ENCODE measurements at regions of chr13 and their contacts with region 1.

Region 1: GRCh38 chr13:28792992-28793391 is 27.1 kb upstream of the MTUS2 start:
- DNase-seq: no peak
- H3K4me3 ChIP-seq: no peak overlapping the region
- H3K27ac ChIP-seq: no peak overlapping the region
- H3K4me1 ChIP-seq: no peaks in the 10 kb centered on the region
- H3K27me3 ChIP-seq: peaks cover 6% of the 10 kb centered on the region
- CTCF ChIP-seq: no peak
- POLR2A ChIP-seq: no peak

Region 2: GRCh38 chr13:28324181-28324789 is 468.7 kb before region 1 on chr13:
- intact Hi-C with region 1: loop called (anchors 5 kb)
- DNase-seq: peak; percentile 53 to 77 (median 67)
- H3K4me3 ChIP-seq: no peak overlapping the region
- H3K27ac ChIP-seq: no peak overlapping the region
- H3K4me1 ChIP-seq: no peaks in the 10 kb centered on the region
- H3K27me3 ChIP-seq: no peaks in the 10 kb centered on the region
- CTCF ChIP-seq: peak; percentile 61 to 78 (median 72)
- POLR2A ChIP-seq: no peak

Region 3: DNA sequence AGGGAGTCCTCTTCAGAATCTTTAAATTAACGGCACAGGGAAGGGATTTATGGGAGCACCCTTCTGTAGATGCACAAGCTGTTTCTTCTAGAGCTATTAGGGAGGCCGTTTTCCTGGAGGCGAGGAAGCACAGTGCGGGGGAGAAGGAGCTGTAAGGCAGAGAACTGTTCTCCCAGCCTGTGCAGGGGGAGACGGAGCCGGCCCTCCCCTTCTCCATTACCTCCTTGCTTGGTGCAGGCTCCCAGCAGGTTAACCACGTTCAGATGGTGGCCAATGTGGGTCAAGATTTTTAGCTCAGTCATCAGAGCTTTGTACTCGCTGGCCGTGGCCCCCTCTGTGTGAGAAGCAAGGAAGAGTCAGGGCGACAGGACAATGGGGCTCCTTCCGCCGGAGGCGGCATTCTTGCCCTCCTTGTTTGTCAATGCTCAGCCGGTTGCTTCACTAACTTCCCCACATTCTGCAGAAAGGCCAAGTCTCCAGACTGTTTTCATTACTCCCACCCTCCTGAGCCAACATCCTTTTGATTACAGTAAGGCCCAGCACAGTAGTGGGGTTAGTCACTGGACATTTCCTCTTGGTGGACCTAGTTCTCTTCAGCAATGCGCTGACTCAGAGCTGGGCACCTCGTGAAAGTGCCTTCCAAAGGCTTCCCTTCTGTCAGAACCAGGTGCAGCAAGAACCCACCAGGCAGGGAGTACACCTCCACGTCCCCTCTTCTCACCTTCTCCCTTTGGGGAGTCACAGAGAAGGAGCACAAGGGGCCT is 463.4 kb before region 1 on chr13:
- intact Hi-C with region 1: loop called (anchors 5 kb)
- DNase-seq: peak in 5 of 7 donors; percentile 15 to 55 (median 26)
- H3K4me3 ChIP-seq: no peak overlapping the region
- H3K27ac ChIP-seq: peak overlapping the region in 1 of 5 donors; percentile 40
- H3K4me1 ChIP-seq: no peaks in the 10 kb centered on the region
- H3K27me3 ChIP-seq: no peaks in the 10 kb centered on the region
- CTCF ChIP-seq: no peak
- POLR2A ChIP-seq: no peak

Region 4: DNA sequence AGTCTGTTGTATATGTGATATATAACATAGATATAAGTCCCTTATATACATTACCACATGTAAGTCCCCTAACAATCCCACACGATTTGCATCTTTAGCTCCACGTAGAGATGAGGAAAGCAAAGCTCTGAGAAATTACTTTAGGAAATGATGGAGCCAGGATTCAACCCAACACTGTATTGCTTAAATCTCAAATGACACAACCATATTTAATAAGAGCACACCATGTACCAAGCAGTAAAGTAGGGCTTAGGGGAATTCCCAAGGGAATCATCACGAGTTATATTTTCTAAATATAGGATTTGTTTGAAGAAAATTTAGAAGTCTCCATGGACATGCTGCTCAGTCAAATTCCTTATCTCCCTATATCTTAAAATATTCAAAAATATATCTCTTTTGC is 195.4 kb before region 1 on chr13:
- intact Hi-C with region 1: no loop called
- DNase-seq: no peak
- H3K4me3 ChIP-seq: no peak overlapping the region
- H3K27ac ChIP-seq: no peak overlapping the region
- H3K4me1 ChIP-seq: no peaks in the 10 kb centered on the region
- H3K27me3 ChIP-seq: peaks cover 3% of the 10 kb centered on the region
- CTCF ChIP-seq: no peak
- POLR2A ChIP-seq: no peak

Region 5: DNA sequence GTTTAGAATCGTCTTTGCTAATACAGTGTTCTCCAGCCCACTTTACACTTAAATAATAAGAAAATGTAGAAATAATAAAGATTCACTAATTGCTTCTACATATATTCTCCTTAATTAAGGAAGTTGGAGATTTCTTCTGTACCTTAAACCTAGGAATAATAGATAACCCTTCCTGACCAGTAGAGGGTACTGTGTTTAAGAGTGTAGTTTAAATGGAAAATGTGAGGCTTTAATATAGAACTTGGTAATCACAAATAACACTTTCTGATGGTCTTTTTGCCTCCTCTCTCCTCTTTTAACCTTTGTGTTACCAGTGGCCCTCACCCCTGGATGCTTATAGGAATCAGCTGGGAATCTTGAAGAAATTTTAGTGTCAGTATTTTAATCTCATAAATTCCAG is 113.4 kb before region 1 on chr13:
- intact Hi-C with region 1: loop called in 1 of 2 experiments (anchors 5 kb)
- DNase-seq: no peak
- H3K4me3 ChIP-seq: no peak overlapping the region
- H3K27ac ChIP-seq: no peak overlapping the region
- H3K4me1 ChIP-seq: no peaks in the 10 kb centered on the region
- H3K27me3 ChIP-seq: no peaks in the 10 kb centered on the region
- CTCF ChIP-seq: peak; percentile 16 to 53 (median 34)
- POLR2A ChIP-seq: no peak

Region 6: DNA sequence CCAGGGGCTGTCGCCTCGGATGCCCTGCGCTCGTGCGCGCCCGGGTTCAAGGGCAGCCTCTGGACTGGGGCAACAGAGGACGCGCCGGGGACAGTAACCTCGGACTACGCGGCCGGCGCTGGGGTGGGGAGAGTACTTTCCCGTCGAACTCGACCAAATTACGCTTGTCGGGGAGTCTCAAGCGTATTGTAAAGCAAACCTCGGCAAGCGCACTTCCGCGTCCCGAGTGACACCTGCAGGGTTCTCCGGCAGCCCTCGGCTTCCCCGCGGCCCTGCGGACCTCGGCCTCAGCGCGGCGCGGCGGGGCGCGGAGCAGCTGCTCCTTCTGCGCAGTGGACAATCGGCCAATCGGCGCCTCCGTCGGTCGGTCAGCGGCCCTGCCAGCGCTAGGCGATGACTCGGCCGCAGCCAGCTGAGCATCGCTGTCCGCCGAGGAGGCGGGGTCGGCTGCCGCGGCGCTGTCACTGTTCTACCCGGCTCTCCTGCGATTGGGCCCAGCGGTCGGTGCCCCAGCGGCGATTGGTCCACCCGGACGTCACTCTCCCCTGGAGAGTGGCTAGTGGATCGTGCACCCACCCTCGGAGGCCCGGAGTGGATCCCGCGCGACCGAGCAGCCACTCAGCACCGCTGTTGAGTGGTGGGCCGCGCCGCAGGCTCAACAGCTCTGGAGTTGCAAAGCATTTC is 74.3 kb before region 1 on chr13 and contains the start of gene SLC46A3:
- intact Hi-C with region 1: loop called in 1 of 2 experiments (anchors 10 kb)
- DNase-seq: peak; percentile 99 to 100 (median 99)
- H3K4me3 ChIP-seq: peak within 1 kb of the TSS in 3 of 4 donors; percentile 20 to 93 (median 49)
- H3K27ac ChIP-seq: peak within 1 kb of the TSS; percentile 77 to 100 (median 97)
- H3K4me1 ChIP-seq: peaks cover 7 to 28% of the 10 kb centered on the region in 2 donors
- H3K27me3 ChIP-seq: no peaks in the 10 kb centered on the region
- CTCF ChIP-seq: peak in 2 of 6 experiments; percentile 19 to 28
- POLR2A ChIP-seq: peak; percentile 79 to 90
- total RNA-seq, gene SLC46A3: 13.9 to 87.4 (median 32.9) TPM